ENCODE measurements at regions of chr7 and their contacts with region 1.

Region 1: DNA sequence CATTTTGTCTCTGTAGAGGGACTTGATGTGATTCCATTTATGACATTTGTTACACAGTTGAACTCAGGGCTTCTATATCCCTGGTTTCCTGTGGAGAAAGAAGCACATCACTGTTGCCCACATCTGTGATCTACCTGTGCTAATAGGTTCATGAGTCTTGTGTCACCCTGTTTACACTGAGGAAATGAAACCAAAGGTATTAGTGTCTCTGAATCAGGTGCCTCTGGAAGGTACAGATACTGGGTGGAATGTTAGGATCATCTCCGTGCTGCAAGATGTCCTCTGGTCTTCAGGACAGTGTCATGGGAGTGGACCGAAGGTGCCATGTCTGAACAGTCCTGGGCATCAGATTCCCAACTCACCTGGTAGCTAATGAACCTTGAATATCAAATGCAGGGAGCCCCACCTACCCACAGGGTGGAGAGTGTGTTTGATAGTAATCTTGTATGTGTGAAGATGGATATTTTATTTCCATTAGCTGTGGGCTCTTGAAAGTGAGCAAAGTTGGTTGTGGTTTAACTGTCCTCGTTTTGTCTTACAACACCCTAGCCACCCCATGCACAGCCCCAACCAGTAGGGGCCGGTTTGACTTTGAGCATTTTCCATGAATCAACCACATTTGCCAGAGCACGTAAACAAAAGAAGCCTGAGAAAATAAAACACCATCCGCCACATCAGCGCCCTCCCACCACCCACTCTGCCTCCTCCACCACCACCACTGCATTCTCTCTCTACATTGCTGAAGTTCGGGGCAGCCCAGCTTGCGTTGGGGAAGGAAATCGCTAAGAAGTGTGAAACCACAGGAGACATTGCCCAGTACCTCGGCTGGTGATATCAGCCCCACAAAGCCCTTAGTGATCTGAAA is 40.7 kb downstream of the TARP start:
- DNase-seq: peak; percentile 93
- H3K4me3 Mint-ChIP-seq: peak overlapping the region; percentile 52
- H3K27ac Mint-ChIP-seq: peak overlapping the region; percentile 88
- H3K4me1 Mint-ChIP-seq: peaks cover 52% of the 10 kb centered on the region
- H3K27me3 Mint-ChIP-seq: no peaks in the 10 kb centered on the region

Region 2: GRCh38 chr7:36389371-36390198 is 1843.1 kb before region 1 on chr7 and contains the start of gene ANLN:
- intact Hi-C with region 1: loop called (anchors 5 kb)
- DNase-seq: peak; percentile 97
- H3K4me3 Mint-ChIP-seq: peak within 1 kb of the TSS; percentile 92
- H3K27ac Mint-ChIP-seq: peak within 1 kb of the TSS; percentile 85
- H3K4me1 Mint-ChIP-seq: peaks cover 33% of the 10 kb centered on the region
- H3K27me3 Mint-ChIP-seq: peaks cover 12% of the 10 kb centered on the region
- total RNA-seq, gene ANLN: 35.6 and 35.9 TPM in 2 replicates

Region 3: DNA sequence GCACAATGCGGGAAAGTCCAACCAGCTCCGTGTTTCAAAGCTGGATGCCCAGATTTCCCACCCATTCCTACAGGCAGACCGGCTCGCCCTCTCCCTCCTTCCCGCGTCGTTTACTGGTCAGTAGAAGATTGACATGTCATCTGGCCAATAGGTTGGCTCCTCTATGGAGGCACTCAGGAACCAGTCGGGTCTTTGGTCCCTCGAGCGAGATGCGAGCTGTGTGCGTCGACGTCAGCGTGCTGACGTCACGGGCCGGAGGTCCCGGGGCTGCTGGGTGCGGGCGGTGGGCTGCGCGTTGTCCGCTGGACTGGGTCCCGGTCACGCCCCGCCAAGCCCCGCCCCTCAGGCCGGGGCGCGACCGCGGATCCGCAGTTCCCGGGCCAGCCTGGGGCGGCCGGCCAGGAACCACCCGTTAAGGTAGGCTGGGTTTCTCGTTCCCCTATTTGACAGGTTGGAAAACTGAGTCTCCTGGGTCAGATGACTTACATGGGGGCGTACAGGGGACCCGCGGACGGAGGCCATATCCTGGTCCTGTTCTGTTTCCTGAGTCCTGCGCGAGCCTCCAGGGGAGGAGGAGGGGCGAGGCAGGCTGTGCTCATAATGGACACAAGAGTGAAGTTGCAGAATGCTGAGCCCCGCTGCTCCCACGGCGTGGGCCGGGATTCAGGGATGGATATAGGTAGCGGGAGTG is 54.6 kb before region 1 on chr7 and contains the start of gene STARD3NL:
- intact Hi-C with region 1: loop called (anchors 1 kb)
- DNase-seq: peak; percentile 97
- H3K4me3 Mint-ChIP-seq: peak within 1 kb of the TSS; percentile 97
- H3K27ac Mint-ChIP-seq: peak within 1 kb of the TSS; percentile 92
- H3K4me1 Mint-ChIP-seq: peaks cover 34% of the 10 kb centered on the region
- H3K27me3 Mint-ChIP-seq: peaks cover 11% of the 10 kb centered on the region
- total RNA-seq, gene STARD3NL: 27.1 and 27.5 TPM in 2 replicates

Region 4: GRCh38 chr7:38245409-38245977 is 12.8 kb after region 1 on chr7:
- intact Hi-C with region 1: loop called (anchors 1 kb)
- DNase-seq: no peak
- H3K4me3 Mint-ChIP-seq: no peak overlapping the region
- H3K27ac Mint-ChIP-seq: no peak overlapping the region
- H3K4me1 Mint-ChIP-seq: peaks cover 4% of the 10 kb centered on the region
- H3K27me3 Mint-ChIP-seq: peaks cover 3% of the 10 kb centered on the region

Region 5: DNA sequence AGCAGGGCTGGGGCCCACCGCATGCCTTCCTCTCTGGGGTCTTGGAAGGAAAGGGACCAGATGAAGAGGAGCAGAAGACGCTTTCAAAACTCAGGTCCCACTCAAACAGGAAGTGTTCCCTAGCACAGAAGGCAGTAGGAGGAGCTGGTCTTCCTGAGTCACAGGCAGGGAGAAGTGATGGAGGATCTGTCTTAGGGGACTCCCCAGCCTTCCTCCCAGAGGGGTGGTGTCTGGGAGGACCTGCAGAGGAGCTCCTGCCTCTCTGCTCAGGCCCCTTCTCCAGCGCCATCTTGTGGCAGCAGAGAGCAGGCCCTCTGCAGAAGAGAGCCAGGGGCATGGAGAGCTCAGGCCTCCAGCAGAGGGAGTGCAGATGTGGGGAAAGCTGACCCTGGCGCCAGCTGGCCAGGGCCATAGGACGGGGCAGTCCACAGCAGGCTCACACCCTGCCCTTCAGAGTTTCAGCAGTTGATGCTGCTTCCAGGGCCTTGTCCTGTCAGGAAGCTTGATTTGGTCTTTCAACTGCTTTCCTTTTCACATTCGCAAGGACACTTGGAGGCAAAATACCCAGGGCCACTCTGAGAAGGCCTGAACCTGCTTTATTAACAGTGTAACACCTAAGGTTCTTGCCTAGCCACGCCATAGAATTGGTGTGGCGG is 102.9 kb after region 1 on chr7:
- intact Hi-C with region 1: loop called (anchors 2 kb)
- DNase-seq: peak; percentile 94
- H3K4me3 Mint-ChIP-seq: peak overlapping the region; percentile 71
- H3K27ac Mint-ChIP-seq: peak overlapping the region; percentile 74
- H3K4me1 Mint-ChIP-seq: peaks cover 37% of the 10 kb centered on the region
- H3K27me3 Mint-ChIP-seq: no peaks in the 10 kb centered on the region

Measured in activated CD4-positive, alpha-beta T cell treated with anti-CD3 and anti-CD28 coated beads, Interleukin-2, amount 10 ng/mL, durations not matched to agents 24 days and 14 days (primary cell).